ENCODE measurements at regions of chr19 and their contacts with region 1.

Region 1: DNA sequence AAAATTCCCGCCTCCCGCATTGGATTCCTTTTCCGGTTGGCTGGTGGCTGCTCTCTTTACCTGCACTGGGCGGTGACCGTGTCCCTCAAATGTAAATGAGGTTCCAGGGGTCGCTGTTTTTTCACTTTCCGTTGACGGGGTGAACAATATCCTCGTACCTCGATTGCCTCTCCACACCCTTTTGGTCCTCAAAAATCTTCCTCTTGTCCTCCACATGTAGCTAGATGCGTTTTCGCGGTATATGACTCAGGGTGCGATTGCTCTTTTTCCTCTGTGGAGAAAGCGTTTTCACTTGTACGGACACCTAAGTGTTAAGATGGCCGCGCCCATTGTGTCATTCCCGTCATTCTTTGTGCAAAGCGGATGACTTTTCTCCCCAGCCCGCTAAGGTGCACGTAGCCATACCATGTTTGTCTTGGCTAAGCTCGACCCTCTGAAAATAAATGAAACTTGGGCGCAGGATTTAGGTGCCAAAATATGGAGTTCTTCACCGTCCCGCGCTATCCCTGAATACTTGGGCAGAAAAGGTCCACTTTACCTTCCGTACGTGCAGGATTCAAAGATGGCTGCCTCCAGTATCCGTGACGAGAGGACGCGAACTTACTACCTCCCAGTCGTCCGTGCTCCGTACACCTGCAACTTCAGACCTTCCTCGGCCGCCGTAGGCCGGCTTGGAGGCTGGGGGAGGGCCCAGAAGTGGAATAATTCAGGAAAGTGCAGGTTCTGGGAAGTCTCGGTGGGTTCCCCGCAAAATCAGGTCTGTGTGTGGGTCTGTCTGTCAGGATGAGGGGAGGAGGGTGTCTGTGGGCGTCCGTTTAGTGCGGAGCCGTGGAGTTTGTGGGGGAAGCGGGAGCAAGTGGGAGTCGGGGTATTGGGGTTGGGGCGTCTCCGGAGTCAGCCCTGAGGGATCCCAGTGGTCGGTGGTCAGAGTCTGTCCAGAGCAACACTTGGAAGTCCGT is at the start of gene ZNF613:
- DNase-seq: peak; percentile 94
- ATAC-seq: peak; percentile 89
- H3K4me3 ChIP-seq: peak within 1 kb of the TSS; percentile 75 to 89
- H3K27ac ChIP-seq: peak within 1 kb of the TSS; percentile 65
- H3K4me1 ChIP-seq: peaks cover 0 to 7% of the 10 kb centered on the region in 2 experiments; a peak in 1 of 4 replicates
- H3K27me3 ChIP-seq: no peaks in the 10 kb centered on the region
- CTCF ChIP-seq: peak in 2 of 3 experiments; percentile 17 to 34; a peak in 2 of 6 replicates
- POLR2A ChIP-seq: no peak
- RAD21 ChIP-seq: no peak
- total RNA-seq, gene ZNF613: 2.2 TPM

Region 2: DNA sequence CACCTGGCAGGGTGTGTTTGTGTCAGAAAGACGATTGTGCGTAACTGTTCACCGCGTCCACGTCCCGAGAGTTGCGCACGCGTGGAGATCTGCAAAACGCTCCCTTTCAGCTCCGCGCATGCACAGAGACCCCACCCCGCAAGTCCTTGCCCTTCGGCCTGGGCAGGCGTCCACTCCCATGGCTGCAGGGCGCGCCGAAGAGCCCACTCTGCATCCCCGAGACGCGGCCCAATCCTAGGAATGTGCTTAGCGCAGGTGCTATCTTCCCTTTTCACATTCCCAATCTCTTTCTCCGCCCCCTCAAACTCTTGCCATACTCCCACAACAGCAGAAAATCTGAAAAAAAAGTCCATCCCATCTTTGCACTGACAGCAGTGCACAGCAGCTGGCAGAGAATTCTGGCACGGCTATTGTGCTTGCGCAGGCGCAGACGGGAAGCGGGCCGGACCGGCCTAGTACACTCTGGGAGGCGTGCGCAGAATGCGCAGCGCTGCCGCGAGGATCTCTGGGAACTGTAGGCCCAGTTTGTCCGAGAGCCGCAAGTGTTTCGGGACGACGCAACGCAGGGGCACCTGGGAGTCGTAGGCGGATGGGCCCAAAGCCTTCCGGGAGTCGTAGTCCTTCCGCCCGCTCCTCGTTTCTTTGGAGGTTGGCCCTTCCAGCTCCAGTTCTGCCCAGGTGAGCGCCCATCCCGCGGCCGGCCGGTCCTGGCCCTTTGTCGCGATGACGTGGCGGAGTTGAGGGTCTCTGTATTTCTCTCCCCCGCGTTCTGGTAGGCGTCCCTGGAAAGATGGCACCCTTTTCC is 332.9 kb before region 1 on chr19:
- CTCF ChIA-PET with region 1: no interaction called
- POLR2A ChIA-PET with region 1: no interaction called
- RAD21 ChIA-PET with region 1: no interaction called
- intact Hi-C with region 1: no loop called
- DNase-seq: peak; percentile 90
- ATAC-seq: peak; percentile 100
- H3K4me3 ChIP-seq: peak overlapping the region; percentile 51 to 58
- H3K27ac ChIP-seq: no peak overlapping the region; the same call in 1 of the 2 replicates
- H3K4me1 ChIP-seq: peaks cover 4 to 12% of the 10 kb centered on the region in 2 experiments; a peak in 2 of 4 replicates
- H3K27me3 ChIP-seq: no peaks in the 10 kb centered on the region
- CTCF ChIP-seq: no peak
- POLR2A ChIP-seq: peak; percentile 19
- RAD21 ChIP-seq: no peak

Region 3: DNA sequence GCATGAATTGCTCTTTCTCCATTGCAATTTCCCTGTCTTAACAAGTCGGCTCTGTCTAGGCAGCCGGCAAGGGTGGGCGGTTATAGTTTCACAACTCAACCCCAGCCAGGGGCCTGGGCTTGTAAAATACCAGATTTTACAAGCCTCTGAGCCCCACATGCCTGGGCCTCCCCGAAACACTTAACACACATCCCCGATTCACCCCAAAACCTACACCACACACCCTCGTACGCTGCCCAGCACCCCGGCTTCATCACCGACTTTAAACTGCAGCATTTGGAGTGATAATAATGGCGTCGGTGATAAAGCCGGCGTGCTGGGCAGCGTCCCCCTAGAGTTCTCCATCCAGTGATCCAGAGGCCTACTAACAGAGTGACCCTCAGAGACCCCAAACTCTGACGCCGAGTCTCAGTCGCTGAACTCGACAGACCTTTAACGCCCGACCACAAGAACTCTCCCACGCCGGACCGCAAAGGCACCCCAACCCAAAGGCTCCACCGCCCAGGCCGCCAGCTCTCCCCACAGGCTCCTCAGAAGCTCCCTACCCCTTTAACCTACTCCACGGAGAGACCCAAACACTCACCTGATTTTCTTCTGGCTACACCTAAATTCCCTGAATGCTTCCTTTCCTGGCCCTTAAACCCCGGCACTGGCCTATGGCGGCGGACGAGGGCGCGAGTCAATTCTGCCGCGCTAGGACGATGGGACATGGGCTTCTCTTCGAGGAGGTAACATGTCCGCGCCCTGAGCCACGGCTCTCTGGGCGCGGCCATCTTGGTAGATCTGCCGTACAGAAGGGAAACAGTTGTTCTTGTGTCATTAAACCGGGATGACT is 22.5 kb before region 1 on chr19 and contains the start of gene ZNF649:
- CTCF ChIA-PET with region 1: no interaction called
- POLR2A ChIA-PET with region 1: no interaction called
- RAD21 ChIA-PET with region 1: no interaction called
- intact Hi-C with region 1: loop called (anchors 1 kb)
- DNase-seq: peak; percentile 82
- ATAC-seq: peak; percentile 94
- H3K4me3 ChIP-seq: peak within 1 kb of the TSS; percentile 71 to 72
- H3K27ac ChIP-seq: peak within 1 kb of the TSS; percentile 53
- H3K4me1 ChIP-seq: peaks cover 0 to 4% of the 10 kb centered on the region in 2 experiments; a peak in 1 of 4 replicates
- H3K27me3 ChIP-seq: no peaks in the 10 kb centered on the region
- CTCF ChIP-seq: 0 out of 6 replicates have a peak, but pooled peaks of 1 of the 3 experiments have one; percentile 12
- POLR2A ChIP-seq: no peak
- RAD21 ChIP-seq: no peak
- total RNA-seq, gene ZNF649: 7.3 TPM

Region 4: DNA sequence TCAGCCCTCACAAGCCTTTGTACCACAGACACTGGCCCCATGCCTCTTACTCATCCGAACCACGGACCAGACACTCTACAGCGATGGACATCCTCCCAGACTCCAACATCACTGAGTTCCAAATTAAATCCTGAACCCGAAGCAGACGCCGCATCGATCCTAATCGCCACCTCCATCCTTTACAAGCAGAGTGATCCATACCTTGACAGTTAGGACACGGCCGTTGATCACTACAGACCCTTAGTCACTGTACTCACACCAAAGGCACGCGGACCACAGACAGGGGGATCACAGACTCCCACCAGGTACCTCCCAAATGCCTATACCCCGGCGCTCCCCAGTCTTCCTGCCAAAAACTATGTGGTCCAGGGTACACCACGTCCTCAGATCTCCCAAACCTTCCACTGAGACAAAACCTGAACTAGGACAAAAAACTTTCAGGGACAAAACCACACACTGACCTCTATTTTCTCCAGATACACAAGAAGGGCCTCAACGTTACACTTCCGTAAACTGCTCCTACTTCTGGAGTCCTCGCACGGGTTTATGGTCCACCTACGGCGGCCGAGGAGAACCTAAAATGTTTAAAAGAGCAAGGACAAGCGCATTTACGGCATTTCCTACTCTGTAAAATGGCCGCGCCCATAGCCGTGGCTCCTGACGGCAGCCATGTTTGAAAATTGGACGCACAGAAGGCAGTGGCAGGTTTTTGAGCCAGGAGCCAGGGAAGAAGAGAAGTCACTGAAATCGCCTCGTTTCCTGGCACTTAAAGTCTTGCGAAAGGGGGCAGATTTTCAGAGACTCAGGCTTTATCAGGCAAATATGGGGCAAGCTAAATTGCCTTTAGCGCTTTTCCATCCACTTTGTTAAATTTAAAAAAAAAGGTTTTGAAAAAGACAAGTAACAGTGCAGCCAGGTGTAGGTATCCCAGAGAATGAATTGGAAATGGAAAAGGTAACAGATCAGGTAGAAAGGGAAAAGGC is 59.5 kb after region 1 on chr19 and contains the start of gene ZNF350:
- CTCF ChIA-PET with region 1: no interaction called
- POLR2A ChIA-PET with region 1: no interaction called
- RAD21 ChIA-PET with region 1: no interaction called
- intact Hi-C with region 1: loop called (anchors 1 kb)
- DNase-seq: peak; percentile 90
- ATAC-seq: peak; percentile 95
- H3K4me3 ChIP-seq: peak within 1 kb of the TSS; percentile 53 to 65
- H3K27ac ChIP-seq: peak within 1 kb of the TSS; percentile 44
- H3K4me1 ChIP-seq: peaks cover 3 to 7% of the 10 kb centered on the region in 2 experiments; a peak in 1 of 4 replicates
- H3K27me3 ChIP-seq: no peaks in the 10 kb centered on the region
- CTCF ChIP-seq: no peak
- POLR2A ChIP-seq: no peak
- RAD21 ChIP-seq: no peak
- total RNA-seq, gene ZNF350: 2.3 TPM

Region 5: GRCh38 chr19:52269338-52270261 is 342.5 kb after region 1 on chr19 and contains the start of gene ZNF766:
- CTCF ChIA-PET with region 1: no interaction called
- POLR2A ChIA-PET with region 1: no interaction called
- RAD21 ChIA-PET with region 1: no interaction called
- intact Hi-C with region 1: no loop called
- DNase-seq: peak; percentile 81
- ATAC-seq: peak; percentile 98
- H3K4me3 ChIP-seq: peak within 1 kb of the TSS; percentile 98 to 99
- H3K27ac ChIP-seq: peak within 1 kb of the TSS; percentile 84
- H3K4me1 ChIP-seq: peaks cover 0 to 16% of the 10 kb centered on the region in 2 experiments; a peak in 2 of 4 replicates
- H3K27me3 ChIP-seq: no peaks in the 10 kb centered on the region
- CTCF ChIP-seq: no peak
- POLR2A ChIP-seq: peak; percentile 88
- RAD21 ChIP-seq: no peak
- total RNA-seq, gene ZNF766: 17.9 TPM

Measured in HCT116 (cell line).